HepG2 (cell line): ENCODE measurements at regions of chr4 and their contacts with region 1.

Region 1: GRCh38 chr4:59247032-59247431 is 1953.1 kb upstream of the ADGRL3 start:
- DNase-seq: peak; percentile 1
- ATAC-seq: no peak
- H3K4me3 ChIP-seq: no peak overlapping the region
- H3K27ac ChIP-seq: no peak overlapping the region
- H3K4me1 ChIP-seq: no peaks in the 10 kb centered on the region
- H3K27me3 ChIP-seq: no peaks in the 10 kb centered on the region
- CTCF ChIP-seq: no peak
- EP300 ChIP-seq: no peak
- POLR2A ChIP-seq: no peak
- RAD21 ChIP-seq: no peak

Region 2: DNA sequence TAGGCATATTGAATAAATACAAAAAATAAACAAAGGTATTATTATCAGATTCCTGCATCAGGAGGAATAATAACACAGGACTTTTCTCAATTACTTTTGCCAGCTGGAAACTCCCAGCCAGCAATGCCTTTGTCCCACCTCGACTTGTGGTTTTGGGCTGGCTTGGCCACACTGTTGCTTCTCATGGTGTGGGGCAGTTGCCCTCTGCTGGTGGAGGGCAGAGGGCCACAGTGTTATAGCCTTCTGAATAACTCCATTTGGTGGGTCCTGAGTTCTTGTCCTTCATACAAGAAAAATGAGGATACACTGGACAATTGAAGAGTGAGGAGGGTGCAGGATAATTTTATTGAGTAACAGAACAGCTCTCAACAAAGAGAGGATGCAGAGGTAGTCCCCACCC is 747.1 kb after region 1 on chr4:
- CTCF ChIA-PET with region 1: no interaction called
- POLR2A ChIA-PET with region 1: no interaction called
- in situ Hi-C with region 1: no loop called
- intact Hi-C with region 1: loop called (anchors 2 kb)
- DNase-seq: peak; percentile 2
- ATAC-seq: peak; percentile 81
- H3K4me3 ChIP-seq: no peak overlapping the region
- H3K27ac ChIP-seq: no peak overlapping the region
- H3K4me1 ChIP-seq: no peaks in the 10 kb centered on the region
- H3K27me3 ChIP-seq: no peaks in the 10 kb centered on the region; a peak in 1 of 5 replicates
- CTCF ChIP-seq: peak; percentile 27
- EP300 ChIP-seq: no peak
- POLR2A ChIP-seq: no peak
- RAD21 ChIP-seq: no peak

Region 3: GRCh38 chr4:60201057-60201673 is 954.1 kb after region 1 on chr4:
- CTCF ChIA-PET with region 1: no interaction called
- POLR2A ChIA-PET with region 1: no interaction called
- in situ Hi-C with region 1: loop called (anchors 10 kb)
- intact Hi-C with region 1: no loop called
- DNase-seq: peak; percentile 24
- ATAC-seq: peak; percentile 67
- H3K4me3 ChIP-seq: no peak overlapping the region
- H3K27ac ChIP-seq: no peak overlapping the region
- H3K4me1 ChIP-seq: no peaks in the 10 kb centered on the region
- H3K27me3 ChIP-seq: no peaks in the 10 kb centered on the region
- CTCF ChIP-seq: peak; percentile 73
- EP300 ChIP-seq: no peak
- POLR2A ChIP-seq: no peak
- RAD21 ChIP-seq: 0 out of 2 replicates have a peak, but pooled peaks have one; percentile 36